Activated T-helper 1 cell treated with anti-CD3 and anti-CD28 coated beads, Interleukin-12 subunit alpha, Interleukin-12 subunit beta, Interleukin-2, Interleukin-4 antibody, amounts not matched to agents 30 ng/mL and 10 ng/mL and 1 ng/mL, durations not matched to agents 14 hours and 24 hours and 36 hours (primary cell): ENCODE measurements at regions of chr9 and their contacts with region 1.

Region 1: GRCh38 chr9:114405294-114406034 is 17.7 kb upstream of the AKNA start:
- DNase-seq: peak; percentile 71
- H3K4me3 Mint-ChIP-seq: no peak overlapping the region
- H3K27ac Mint-ChIP-seq: no peak overlapping the region
- H3K4me1 Mint-ChIP-seq: peaks cover 6% of the 10 kb centered on the region
- H3K27me3 Mint-ChIP-seq: peaks cover 3% of the 10 kb centered on the region

Region 2: GRCh38 chr9:113817171-113817570 is 588.3 kb before region 1 on chr9:
- intact Hi-C with region 1: no loop called
- DNase-seq: no peak
- H3K4me3 Mint-ChIP-seq: no peak overlapping the region
- H3K27ac Mint-ChIP-seq: no peak overlapping the region
- H3K4me1 Mint-ChIP-seq: no peaks in the 10 kb centered on the region
- H3K27me3 Mint-ChIP-seq: peaks cover 19% of the 10 kb centered on the region

Region 3: GRCh38 chr9:115524453-115525059 is 1119.1 kb after region 1 on chr9:
- intact Hi-C with region 1: loop called (anchors 2 kb)
- DNase-seq: no peak
- H3K4me3 Mint-ChIP-seq: no peak overlapping the region
- H3K27ac Mint-ChIP-seq: no peak overlapping the region
- H3K4me1 Mint-ChIP-seq: no peaks in the 10 kb centered on the region
- H3K27me3 Mint-ChIP-seq: peaks cover 3% of the 10 kb centered on the region